Brain microvascular endothelial cell (primary cell): ENCODE measurements at regions of chr11 and their contacts with region 1.

Region 1: DNA sequence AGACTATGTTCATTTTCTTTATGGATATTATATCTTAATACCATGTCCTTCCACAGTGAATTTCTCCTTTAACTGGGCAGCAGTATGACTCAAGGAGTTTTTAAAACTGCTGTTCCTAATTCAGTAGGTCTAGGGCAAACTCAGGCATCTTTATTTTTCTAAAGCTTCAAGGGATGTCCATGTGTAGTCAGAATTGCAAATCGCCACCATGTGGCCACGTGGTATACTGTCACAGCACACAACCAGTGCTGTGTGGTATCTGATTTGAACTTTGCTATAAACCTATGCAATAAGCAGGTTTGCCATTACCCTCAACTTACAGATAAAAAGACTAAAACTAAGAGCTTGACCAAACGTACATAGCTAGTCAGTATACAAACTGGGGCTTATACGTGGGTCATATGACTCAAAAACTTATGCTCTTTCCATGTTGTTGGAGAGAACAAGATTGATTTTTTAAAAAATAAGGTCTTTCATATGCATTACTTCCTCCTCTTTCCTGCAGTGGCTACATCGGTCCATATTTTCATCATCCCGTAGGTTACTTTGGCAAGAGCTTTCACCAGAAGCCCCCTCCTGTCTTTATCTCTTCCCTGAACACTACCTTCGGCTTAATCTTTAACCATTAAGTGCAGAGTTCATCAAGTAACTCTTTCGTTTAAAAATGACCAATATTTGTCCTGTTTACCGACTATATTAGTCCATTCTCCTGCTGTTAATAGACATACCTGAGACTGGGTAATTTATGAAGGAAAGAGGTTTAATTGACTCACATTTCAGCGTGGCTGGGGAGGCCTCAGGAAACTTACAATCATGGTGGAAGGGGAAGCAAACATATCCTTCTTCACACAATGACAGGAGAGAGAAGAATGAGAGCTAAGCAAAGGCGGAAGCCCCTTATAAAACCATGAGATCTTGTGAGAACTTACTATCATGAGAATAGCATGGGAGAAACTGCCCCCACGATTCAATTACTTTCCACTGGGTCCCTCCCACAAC is 8.0 kb upstream of the HTATIP2 start:
- DNase-seq: peak; percentile 60
- H3K4me3 ChIP-seq: no peak overlapping the region
- H3K27ac ChIP-seq: no peak overlapping the region
- H3K27me3 ChIP-seq: no peaks in the 10 kb centered on the region
- CTCF ChIP-seq: peak; percentile 81

Region 2: GRCh38 chr11:19742588-19743292 is 612.8 kb before region 1 on chr11:
- in situ Hi-C with region 1: loop called (anchors 25 kb)
- DNase-seq: peak; percentile 79
- H3K4me3 ChIP-seq: no peak overlapping the region
- H3K27ac ChIP-seq: no peak overlapping the region
- H3K27me3 ChIP-seq: no peaks in the 10 kb centered on the region
- CTCF ChIP-seq: peak; percentile 89

Region 3: GRCh38 chr11:19938169-19938856 is 417.2 kb before region 1 on chr11:
- in situ Hi-C with region 1: loop called (anchors 25 kb)
- DNase-seq: peak; percentile 75
- H3K4me3 ChIP-seq: no peak overlapping the region
- H3K27ac ChIP-seq: no peak overlapping the region
- H3K27me3 ChIP-seq: no peaks in the 10 kb centered on the region
- CTCF ChIP-seq: peak; percentile 95

Region 4: DNA sequence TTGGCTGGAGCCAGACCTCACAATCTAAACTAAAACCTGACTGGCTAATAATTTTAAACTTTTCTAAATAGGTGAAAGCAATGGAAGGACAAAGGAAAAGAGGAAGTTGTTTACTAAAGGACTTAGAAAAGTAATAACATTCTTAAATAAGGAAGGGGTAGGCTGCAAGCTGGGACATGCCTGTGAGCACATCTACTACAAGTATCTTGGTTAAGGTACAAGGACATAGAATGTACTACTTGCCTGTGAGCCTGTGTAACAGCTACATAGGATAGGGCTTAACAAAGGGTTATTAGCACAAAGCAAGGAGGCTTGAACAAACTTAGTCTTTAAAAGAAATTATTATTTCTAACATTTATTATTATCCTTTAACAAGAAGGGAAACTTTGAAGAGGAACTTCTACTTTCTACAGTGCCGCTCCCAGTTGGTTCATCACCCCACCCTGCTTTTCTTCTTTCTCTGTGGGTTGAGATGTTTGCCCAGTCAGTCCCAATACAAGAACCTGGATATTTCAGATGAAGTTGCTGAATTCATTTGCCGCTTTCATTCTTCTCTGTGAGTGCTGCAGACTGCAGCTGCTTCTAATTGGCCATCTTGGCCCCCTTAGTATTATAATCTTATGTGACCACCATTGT is 119.5 kb after region 1 on chr11:
- in situ Hi-C with region 1: no loop called
- DNase-seq: no peak
- H3K4me3 ChIP-seq: no peak overlapping the region
- H3K27ac ChIP-seq: no peak overlapping the region
- H3K27me3 ChIP-seq: no peaks in the 10 kb centered on the region
- CTCF ChIP-seq: no peak